Activated naive CD8-positive, alpha-beta T cell treated with anti-CD3 and anti-CD28 coated beads, Interleukin-2, amount 10 ng/mL, durations not matched to agents 7 days and 5 days (primary cell): ENCODE measurements at regions of chr7 and their contacts with region 1.

Region 1: GRCh38 chr7:24836084-24836483 is 78.8 kb upstream of the GSDME start:
- DNase-seq: no peak
- ATAC-seq: peak; percentile 81
- H3K4me3 Mint-ChIP-seq: peak overlapping the region; percentile 49
- H3K27ac Mint-ChIP-seq: peak overlapping the region; percentile 60
- H3K4me1 Mint-ChIP-seq: peaks cover 42% of the 10 kb centered on the region
- H3K27me3 Mint-ChIP-seq: no peaks in the 10 kb centered on the region

Region 2: DNA sequence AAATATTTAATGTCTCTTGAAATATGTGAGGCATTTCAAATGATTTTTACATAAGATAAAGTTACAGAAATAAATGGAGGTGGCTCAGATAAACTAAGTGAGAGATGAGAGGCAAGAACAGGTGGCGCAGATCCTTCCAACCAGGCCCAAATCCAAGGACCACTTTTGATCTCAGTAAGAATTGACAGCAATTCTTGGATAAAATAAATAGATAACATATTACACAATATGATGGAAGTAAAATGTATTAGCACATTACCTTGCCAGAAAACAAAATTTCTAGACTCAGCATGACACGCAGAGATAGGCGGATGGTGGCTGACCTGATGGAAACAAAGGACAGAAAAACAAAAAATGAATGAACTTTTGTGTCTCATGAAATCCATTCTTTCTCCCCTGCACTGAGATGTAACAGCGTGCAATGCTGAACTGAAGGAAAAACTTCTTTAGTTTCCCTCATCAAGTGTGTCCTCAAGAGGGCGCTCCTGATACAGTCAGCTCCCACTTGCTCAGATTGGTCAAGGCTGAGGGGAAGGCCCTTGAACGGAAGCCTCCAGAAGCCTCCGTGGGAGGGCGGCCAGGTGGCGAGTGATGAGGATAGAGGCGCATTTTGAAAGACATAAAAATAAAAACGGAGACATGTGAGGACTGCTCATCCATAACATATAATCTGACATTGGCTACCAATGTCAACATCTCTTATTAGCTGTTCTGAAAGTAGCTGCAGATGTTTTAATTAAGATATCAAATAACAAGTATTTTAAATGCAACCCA is 16.0 kb before region 1 on chr7:
- POLR2A ChIA-PET with region 1: interaction called, 26 read pairs
- DNase-seq: peak; percentile 67
- ATAC-seq: peak; percentile 37
- H3K4me3 Mint-ChIP-seq: peak overlapping the region; percentile 89
- H3K27ac Mint-ChIP-seq: peak overlapping the region; percentile 99
- H3K4me1 Mint-ChIP-seq: peaks cover 34% of the 10 kb centered on the region
- H3K27me3 Mint-ChIP-seq: no peaks in the 10 kb centered on the region